Motor neuron (in vitro differentiated cells): ENCODE measurements at regions of chr1 and their contacts with region 1.

Region 1: DNA sequence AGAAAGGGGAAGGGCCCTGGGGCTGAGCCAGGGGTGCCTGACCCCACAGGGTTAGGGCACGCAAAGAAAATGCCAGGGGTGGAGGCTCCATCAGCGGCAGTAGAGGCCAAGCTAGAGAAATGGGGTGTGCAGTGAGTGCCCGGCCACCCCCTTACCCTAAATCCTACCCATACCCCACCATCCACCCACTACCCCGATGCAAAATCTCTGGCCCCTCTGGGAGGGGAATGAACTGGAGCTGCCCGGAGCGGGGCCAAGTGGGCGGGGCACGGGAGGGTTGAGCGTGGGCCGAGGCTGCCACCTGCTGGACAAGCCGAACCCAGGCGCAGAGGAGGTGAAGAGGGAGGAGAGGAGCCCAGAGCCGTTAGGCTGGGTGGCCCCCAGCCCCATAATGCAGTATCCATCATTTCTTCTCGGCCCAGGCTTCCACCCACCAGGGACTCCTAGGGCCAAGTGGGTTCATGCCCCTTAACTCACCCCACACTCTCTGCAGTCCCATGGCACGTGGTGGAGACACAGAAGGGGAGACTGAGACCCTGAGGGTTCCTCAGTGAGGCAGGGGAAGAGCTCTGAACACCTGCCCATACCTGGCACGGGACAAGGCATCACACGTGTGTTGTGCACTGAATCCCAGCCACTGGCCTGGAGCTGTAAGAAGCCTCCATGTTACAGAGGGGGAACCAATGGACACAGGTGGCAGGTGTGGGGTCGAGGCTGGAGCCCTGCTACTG is 1.4 kb upstream of the C1QC start:
- ATAC-seq: peak; percentile 86 to 96 (median 90)
- H3K4me3 ChIP-seq: no peak overlapping the region
- H3K27ac ChIP-seq: no peak overlapping the region
- H3K4me1 ChIP-seq: peaks cover 8 to 12% of the 10 kb centered on the region in 2 donors

Region 2: GRCh38 chr1:22105611-22106207 is 536.4 kb before region 1 on chr1:
- in situ Hi-C with region 1: loop called in 1 of 9 experiments (anchors 25 kb)
- ATAC-seq: peak; percentile 32 to 68 (median 50)
- H3K4me3 ChIP-seq: no peak overlapping the region
- H3K27ac ChIP-seq: no peak overlapping the region
- H3K4me1 ChIP-seq: peaks cover 14 to 15% of the 10 kb centered on the region in 2 donors

Region 3: DNA sequence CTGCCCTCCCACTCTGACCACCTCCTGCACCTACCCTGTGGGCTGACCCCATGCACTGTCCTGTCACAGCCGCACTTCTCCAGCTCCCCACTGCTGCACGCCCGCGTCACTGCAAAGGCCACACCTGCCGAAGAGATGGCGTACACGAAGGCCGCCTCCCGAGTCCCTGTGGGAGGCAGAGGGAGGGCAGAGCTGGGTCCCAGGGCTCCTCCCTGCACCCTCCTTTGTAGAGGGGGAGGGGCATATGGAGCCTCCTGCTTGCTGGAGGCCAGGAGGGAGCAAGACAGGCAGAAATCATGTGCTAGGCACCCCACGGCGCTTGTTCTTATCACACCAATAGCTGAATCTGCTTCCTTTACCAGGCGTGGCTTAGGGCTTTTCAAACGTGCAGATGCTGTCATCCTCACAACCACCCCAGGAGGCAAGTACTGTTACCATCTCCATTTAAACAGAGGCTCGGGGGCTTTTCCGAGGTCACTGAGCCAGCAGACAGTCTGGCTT is 520.6 kb before region 1 on chr1:
- in situ Hi-C with region 1: loop called in 5 of 9 experiments (anchors 10 to 25 kb)
- ATAC-seq: peak in 5 of 8 experiments; percentile 75 to 92 (median 88)
- H3K4me3 ChIP-seq: no peak overlapping the region
- H3K27ac ChIP-seq: peak overlapping the region; percentile 14 to 69
- H3K4me1 ChIP-seq: peaks cover 23 to 30% of the 10 kb centered on the region in 2 donors

Region 4: DNA sequence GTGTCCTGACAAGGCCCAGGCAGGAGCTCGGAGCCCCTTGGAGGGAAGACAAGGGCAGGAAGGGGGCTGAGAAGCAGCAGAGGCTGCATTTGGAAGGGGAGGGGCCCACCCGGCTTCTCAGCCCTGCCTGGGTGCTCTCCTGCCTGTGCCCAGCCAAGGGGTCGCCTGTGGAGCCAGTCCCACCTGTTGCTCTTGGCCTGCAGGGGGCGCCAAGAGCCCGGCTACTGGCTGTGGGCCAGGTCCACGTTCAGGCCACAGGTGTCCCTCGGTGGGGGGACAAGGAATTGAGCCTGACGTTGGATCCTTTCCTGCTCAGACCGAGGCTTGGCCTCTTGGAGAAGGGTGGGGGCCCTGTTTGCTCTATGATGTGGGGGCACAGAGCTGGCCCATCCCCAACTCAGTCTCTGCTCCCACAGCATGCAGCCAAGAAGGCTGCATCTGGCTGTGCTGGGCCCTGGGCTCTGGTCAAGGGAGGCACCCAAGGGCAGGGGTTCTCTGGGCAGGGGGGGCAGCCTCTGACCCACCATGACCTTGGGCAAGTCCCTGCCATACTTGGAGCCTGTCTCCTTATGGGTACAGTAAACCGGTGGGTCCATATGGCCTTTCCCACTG is 510.1 kb before region 1 on chr1:
- in situ Hi-C with region 1: loop called in 4 of 9 experiments (anchors 10 to 25 kb)
- ATAC-seq: peak; percentile 64 to 95 (median 70)
- H3K4me3 ChIP-seq: no peak overlapping the region
- H3K27ac ChIP-seq: no peak overlapping the region
- H3K4me1 ChIP-seq: peaks cover 16 to 20% of the 10 kb centered on the region in 2 donors

Region 5: GRCh38 chr1:22163137-22163536 is 478.9 kb before region 1 on chr1:
- in situ Hi-C with region 1: loop called in 1 of 9 experiments (anchors 25 kb)
- ATAC-seq: peak in 5 of 8 experiments; percentile 31 to 59 (median 32)
- H3K4me3 ChIP-seq: no peak overlapping the region
- H3K27ac ChIP-seq: no peak overlapping the region
- H3K4me1 ChIP-seq: peaks cover 8 to 10% of the 10 kb centered on the region in 2 donors

Region 6: GRCh38 chr1:22416555-22417454 is 225.3 kb before region 1 on chr1:
- in situ Hi-C with region 1: loop called (anchors 5 to 25 kb)
- ATAC-seq: peak; percentile 52 to 86 (median 76)
- H3K4me3 ChIP-seq: no peak overlapping the region
- H3K27ac ChIP-seq: no peak overlapping the region
- H3K4me1 ChIP-seq: peaks cover 34 to 40% of the 10 kb centered on the region in 2 donors

Region 7: DNA sequence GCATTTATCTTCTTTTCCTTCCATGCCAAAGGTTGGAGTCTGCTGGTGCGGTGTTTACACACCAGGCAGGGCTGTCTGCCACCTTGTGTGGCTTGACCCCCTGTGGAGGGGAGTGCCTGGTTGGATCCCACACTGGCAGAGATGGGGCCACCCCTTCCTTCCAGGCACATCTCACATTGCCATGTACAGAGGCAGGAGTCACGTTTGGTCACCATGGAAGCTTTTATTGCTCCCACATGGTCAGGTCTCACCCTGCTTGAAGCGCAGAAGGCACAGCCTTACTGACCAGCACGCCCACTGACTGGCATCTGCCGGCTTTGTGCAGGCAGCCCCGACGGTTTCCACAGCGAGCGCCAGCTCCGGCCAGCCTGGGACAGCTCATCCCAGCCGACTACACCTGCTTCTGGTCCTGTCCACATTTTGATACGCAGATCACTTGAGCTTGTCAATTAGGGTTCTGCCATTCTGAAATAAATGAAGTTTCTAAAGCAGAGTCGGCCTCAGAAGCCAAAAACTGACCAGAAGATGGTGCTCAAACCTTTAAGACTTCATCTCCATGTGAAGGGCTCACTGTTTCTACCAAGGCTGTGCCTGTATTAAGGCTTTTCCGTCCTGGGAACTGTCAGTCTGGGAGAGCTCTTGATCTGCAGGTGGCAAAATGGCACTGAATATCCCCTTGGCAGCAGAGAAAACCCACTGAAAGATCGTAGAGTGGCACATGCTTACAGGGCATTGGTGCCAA is 114.3 kb before region 1 on chr1:
- in situ Hi-C with region 1: loop called in 1 of 9 experiments (anchors 10 kb)
- ATAC-seq: peak in 5 of 8 experiments; percentile 46 to 75 (median 58)
- H3K4me3 ChIP-seq: no peak overlapping the region
- H3K27ac ChIP-seq: no peak overlapping the region
- H3K4me1 ChIP-seq: peaks cover 0 to 6% of the 10 kb centered on the region in 2 donors